HCT116 (cell line): ENCODE measurements at regions of chr7 and their contacts with region 1.

Region 1: GRCh38 chr7:100563809-100564400 is 9.8 kb downstream of the SAP25 start:
- DNase-seq: no peak
- ATAC-seq: peak; percentile 80
- H3K4me3 ChIP-seq: no peak overlapping the region
- H3K27ac ChIP-seq: no peak overlapping the region
- H3K4me1 ChIP-seq: peaks cover 0 to 20% of the 10 kb centered on the region in 2 experiments; a peak in 1 of 4 replicates
- H3K27me3 ChIP-seq: no peaks in the 10 kb centered on the region
- CTCF ChIP-seq: peak; percentile 81 to 99 (median 93)
- POLR2A ChIP-seq: no peak
- RAD21 ChIP-seq: peak; percentile 83

Region 2: DNA sequence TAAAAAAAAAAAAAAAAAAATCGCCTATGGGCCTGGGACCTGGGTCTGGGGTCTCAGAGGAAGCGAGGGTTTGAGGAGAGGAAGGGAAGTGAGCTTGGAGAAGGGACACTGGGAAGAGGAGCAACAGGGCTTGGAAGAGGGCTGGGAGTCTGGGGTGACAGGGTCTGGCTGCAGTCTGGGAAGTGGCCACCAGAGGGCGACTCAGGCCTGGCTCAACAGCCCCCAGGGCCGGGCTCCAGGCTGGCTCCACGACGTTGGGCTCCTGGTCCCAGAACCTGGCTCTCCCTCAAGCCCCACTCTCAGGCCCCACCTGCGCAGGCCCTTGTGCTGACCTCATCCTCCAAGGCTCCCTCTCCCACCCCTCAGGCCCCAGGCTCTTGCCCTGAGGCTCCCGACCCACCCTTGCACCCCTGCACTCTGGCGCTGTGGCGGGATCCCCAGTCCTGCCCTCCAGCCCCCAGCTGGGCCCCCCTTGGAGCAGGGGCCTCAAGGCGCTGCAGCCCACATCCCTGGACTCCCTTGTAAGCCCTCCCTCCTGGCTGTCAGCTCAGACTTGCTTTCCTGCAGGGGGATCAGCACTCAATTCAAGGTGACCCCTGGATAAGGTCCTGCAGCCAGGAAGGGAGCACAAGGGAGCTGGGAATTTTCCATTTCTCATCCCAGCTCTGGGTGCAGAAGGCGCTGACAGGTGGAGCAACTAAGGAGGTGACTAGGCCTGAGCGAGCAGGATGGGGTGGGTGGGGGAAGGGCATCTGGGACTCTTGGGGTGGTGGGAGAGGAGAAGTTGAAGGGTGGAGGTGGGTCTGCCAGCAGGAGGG is 94.5 kb before region 1 on chr7:
- CTCF ChIA-PET with region 1: interaction called, 31 read pairs
- POLR2A ChIA-PET with region 1: interaction called, 3 read pairs
- RAD21 ChIA-PET with region 1: interaction called in 1 of 2 experiments, 7 read pairs
- intact Hi-C with region 1: loop called (anchors 1 kb)
- DNase-seq: no peak
- ATAC-seq: peak; percentile 85
- H3K4me3 ChIP-seq: no peak overlapping the region
- H3K27ac ChIP-seq: peak overlapping the region; percentile 52
- H3K4me1 ChIP-seq: peaks cover 22 to 43% of the 10 kb centered on the region in 2 experiments
- H3K27me3 ChIP-seq: no peaks in the 10 kb centered on the region
- CTCF ChIP-seq: peak; percentile 80 to 95 (median 91)
- POLR2A ChIP-seq: no peak
- RAD21 ChIP-seq: peak; percentile 93

Region 3: DNA sequence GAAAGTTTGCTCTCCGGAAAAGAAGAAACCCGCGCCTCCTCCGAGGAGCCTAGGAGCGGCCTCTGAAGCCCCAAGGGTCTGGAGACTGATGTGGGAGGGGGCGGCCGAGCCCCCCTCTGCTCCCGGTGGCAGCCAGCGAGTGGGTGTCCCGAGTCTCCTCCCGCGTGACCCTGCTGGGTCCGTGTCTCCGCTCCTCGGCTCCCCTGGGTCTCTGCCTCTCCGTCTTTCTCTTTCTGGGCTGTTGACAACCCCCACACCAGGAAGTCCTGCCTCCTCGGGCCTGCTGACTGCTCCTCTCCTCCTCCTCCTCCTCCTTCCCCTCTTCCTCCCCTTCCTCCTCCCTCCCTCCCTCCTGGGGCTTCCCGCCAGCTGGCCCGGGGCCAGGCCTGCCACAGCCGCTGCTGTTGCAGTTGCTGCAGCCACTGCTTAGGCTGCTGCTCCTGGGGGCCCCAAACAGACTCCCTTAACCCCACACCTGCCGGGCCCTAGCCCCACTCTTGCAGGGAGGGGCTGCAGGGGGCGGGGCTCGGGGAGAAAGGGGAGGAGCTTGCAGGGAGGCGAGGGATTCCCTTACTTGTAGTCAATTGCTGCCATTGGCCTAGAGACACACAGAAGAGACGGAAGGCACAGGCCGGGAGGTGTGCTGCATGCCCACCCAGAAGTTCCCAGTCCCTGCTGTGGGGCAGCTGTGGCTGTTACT is 84.8 kb before region 1 on chr7 and contains the start of gene TSC22D4:
- CTCF ChIA-PET with region 1: interaction called, 14 read pairs
- POLR2A ChIA-PET with region 1: no interaction called
- RAD21 ChIA-PET with region 1: interaction called in 1 of 2 experiments, 6 read pairs
- intact Hi-C with region 1: no loop called
- DNase-seq: peak; percentile 74
- ATAC-seq: peak; percentile 75
- H3K4me3 ChIP-seq: peak within 1 kb of the TSS; percentile 73 to 94
- H3K27ac ChIP-seq: peak within 1 kb of the TSS; percentile 83
- H3K4me1 ChIP-seq: peaks cover 8 to 29% of the 10 kb centered on the region in 2 experiments
- H3K27me3 ChIP-seq: no peaks in the 10 kb centered on the region
- CTCF ChIP-seq: no peak
- POLR2A ChIP-seq: no peak
- RAD21 ChIP-seq: no peak
- total RNA-seq, gene TSC22D4: 36.9 TPM

Region 4: GRCh38 chr7:100545360-100546128 is 18.4 kb before region 1 on chr7:
- CTCF ChIA-PET with region 1: interaction called, 10 read pairs
- POLR2A ChIA-PET with region 1: no interaction called
- RAD21 ChIA-PET with region 1: no interaction called
- intact Hi-C with region 1: no loop called
- DNase-seq: peak; percentile 81
- ATAC-seq: peak; percentile 94
- H3K4me3 ChIP-seq: peak overlapping the region; percentile 22 to 38
- H3K27ac ChIP-seq: peak overlapping the region; percentile 95
- H3K4me1 ChIP-seq: peaks cover 50 to 56% of the 10 kb centered on the region in 2 experiments
- H3K27me3 ChIP-seq: no peaks in the 10 kb centered on the region
- CTCF ChIP-seq: no peak
- POLR2A ChIP-seq: no peak
- RAD21 ChIP-seq: no peak